ENCODE measurements at regions of chr3 and their contacts with region 1.

Region 1: DNA sequence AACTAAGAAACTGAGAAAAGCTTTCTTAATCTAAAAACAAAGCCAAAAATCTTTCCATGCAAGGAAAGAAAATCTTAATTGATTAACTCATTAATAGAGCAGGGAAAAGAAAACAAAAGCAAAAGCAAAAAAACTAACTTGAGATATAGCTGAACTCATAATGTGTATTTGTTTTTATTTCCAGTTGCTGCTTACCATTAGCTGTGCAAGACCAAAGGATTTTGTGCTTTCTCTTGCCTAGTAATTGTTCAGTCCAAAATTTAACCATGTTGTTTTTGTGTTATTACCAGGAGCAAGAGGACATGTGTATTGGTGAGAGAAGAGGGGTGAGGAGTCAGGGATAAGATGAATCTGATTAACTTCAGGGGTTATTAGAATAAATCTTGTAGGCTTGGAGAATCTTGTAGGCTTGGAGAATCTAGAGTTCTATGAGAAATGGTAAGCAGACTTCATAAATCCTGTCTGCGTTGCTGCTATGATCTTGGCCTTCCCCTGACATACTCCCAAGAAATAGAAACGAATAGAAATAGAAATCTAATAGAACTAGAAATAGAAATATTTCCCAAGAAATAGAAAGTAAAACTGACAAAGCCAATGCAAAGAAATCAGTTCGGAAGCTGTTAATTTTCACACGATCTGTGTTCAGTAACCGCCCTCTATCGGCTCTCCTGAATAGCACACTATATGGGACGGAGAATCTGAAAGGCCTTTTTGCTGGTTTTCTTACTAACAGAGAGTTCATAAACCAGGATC is 72.6 kb upstream of the TNFSF10 start:
- DNase-seq: no peak
- ATAC-seq: no peak
- H3K4me3 Mint-ChIP-seq: peak overlapping the region; percentile 81
- H3K27ac Mint-ChIP-seq: peak overlapping the region; percentile 84
- H3K4me1 Mint-ChIP-seq: peaks cover 54% of the 10 kb centered on the region
- H3K27me3 Mint-ChIP-seq: no peaks in the 10 kb centered on the region

Region 2: DNA sequence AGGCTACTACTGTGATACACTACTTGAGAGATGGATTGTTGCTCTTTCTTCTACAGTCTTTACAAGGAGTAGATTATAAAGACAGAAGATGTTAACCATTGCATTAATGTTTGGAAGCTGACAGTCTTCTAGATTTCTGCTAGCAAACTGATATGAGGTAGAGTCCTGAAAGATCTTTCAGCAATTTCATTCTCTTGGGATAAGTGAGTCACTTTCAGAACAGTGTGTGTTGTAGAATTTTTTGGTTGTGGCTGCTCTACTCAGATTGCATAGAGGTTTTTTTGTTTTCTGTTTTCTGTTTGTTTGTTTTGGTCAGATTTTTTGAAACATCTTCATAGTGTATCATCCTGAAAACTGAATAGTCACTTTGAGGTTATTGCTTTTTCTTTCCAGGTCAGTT is 89.7 kb before region 1 on chr3:
- POLR2A ChIA-PET with region 1: interaction called, 25 read pairs
- DNase-seq: no peak
- ATAC-seq: no peak
- H3K4me3 Mint-ChIP-seq: no peak overlapping the region
- H3K27ac Mint-ChIP-seq: peak overlapping the region; percentile 43
- H3K4me1 Mint-ChIP-seq: peaks cover 48% of the 10 kb centered on the region
- H3K27me3 Mint-ChIP-seq: no peaks in the 10 kb centered on the region

Region 3: GRCh38 chr3:172511783-172512762 is 83.7 kb before region 1 on chr3:
- POLR2A ChIA-PET with region 1: interaction called, 214 read pairs
- DNase-seq: peak; percentile 66
- ATAC-seq: peak; percentile 60
- H3K4me3 Mint-ChIP-seq: peak overlapping the region; percentile 80
- H3K27ac Mint-ChIP-seq: peak overlapping the region; percentile 87
- H3K4me1 Mint-ChIP-seq: peaks cover 81% of the 10 kb centered on the region
- H3K27me3 Mint-ChIP-seq: no peaks in the 10 kb centered on the region

Region 4: GRCh38 chr3:172530566-172530965 is 65.3 kb before region 1 on chr3:
- POLR2A ChIA-PET with region 1: interaction called, 41 read pairs
- DNase-seq: no peak
- ATAC-seq: peak; percentile 77
- H3K4me3 Mint-ChIP-seq: peak overlapping the region; percentile 84
- H3K27ac Mint-ChIP-seq: peak overlapping the region; percentile 88
- H3K4me1 Mint-ChIP-seq: peaks cover 57% of the 10 kb centered on the region
- H3K27me3 Mint-ChIP-seq: no peaks in the 10 kb centered on the region

Region 5: DNA sequence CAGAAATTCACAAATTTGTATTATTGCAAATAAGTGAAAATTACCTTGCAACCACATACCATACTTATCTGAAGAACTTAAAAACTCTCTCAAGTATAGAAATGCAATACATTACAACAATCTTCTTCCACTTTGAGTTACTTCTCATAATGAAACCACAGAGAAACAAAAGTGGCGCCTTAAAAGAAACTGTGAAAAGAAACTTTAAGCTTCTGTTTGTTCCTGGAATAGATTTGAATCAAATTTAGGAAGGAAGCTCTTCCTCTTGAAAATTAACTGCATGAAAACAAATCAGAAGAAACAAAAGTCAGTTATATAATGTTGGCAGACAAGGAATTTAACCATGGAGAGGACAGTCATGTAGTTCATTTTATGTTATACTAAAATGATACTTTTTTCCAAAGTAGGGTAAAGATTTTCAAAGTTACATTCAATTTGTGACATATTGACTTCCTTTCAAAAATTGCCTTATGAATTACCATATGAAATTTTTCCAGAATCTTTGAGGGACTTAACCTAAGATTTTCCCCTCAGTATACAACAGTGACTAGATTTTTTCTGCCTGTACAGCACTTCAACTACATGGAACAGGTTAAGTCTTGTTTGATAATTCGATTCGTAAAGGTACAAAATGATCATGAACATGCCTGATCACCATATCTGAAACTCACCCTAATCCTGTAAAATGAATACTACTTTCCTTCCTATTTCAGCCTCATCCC is 15.0 kb before region 1 on chr3:
- POLR2A ChIA-PET with region 1: interaction called, 12 read pairs
- DNase-seq: no peak
- ATAC-seq: peak; percentile 10
- H3K4me3 Mint-ChIP-seq: peak overlapping the region; percentile 76
- H3K27ac Mint-ChIP-seq: peak overlapping the region; percentile 90
- H3K4me1 Mint-ChIP-seq: peaks cover 90% of the 10 kb centered on the region
- H3K27me3 Mint-ChIP-seq: no peaks in the 10 kb centered on the region

Region 6: DNA sequence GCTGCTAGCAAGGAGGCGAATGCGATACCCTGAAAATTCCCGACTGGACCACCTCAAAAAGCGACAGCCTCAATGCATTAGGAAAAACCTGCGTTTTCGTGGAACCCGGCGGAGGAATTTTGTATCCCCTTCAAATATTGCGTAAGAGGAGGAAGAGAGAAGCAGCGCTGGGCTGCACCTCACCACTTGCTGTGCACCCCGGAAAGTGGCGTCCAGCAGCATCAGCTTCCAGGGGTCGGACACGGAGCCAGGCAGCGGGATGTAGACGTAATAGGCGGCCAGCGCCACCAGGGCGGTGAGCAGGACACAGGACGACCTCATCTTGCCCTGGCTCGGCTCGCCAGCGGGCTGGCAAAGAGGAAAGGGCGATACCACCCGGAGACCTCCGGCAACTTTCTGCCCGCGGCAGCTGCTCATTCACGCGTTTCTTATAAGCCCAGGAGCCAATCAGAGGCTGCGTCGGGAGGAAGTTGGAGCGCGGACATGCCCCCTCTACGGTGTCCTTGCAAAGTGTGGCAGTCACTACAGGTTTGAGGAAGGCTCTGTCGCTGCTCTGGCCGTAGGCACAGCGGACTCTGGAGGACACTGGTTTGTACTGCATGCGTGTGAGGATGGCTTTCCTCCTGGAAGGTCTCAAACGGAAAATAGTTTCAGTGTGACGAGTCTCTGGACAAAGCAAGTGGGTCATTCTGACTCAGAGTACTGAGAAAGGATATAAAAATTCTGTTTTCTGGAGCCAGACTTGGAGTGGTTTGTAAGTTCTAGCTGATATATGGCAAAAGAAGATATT is 115.0 kb after region 1 on chr3 and contains the start of gene NCEH1:
- POLR2A ChIA-PET with region 1: no interaction called
- DNase-seq: peak; percentile 75
- ATAC-seq: peak; percentile 99
- H3K4me3 Mint-ChIP-seq: peak within 1 kb of the TSS; percentile 93
- H3K27ac Mint-ChIP-seq: peak within 1 kb of the TSS; percentile 78
- H3K4me1 Mint-ChIP-seq: peaks cover 16% of the 10 kb centered on the region
- H3K27me3 Mint-ChIP-seq: peaks cover 14% of the 10 kb centered on the region
- total RNA-seq, gene NCEH1: 5.8 to 6.8 TPM

Measured in activated naive CD8-positive, alpha-beta T cell treated with anti-CD3 and anti-CD28 coated beads, Interleukin-2, amount 10 ng/mL, durations not matched to agents 7 days and 5 days (primary cell).